Naive thymus-derived CD4-positive, alpha-beta T cell (primary cell): ENCODE measurements at regions of chr2 and their contacts with region 1.

Region 1: GRCh38 chr2:181305301-181306123 is 151.7 kb upstream of the ITGA4 start:
- DNase-seq: peak in 5 of 9 donors; percentile 47 to 61 (median 54)
- ATAC-seq: peak; percentile 77
- H3K4me3 ChIP-seq: peak overlapping the region; percentile 14
- H3K4me3 Mint-ChIP-seq: peak overlapping the region; percentile 71 to 94 (median 82)
- H3K27ac ChIP-seq: peak overlapping the region; percentile 84
- H3K27ac Mint-ChIP-seq: peak overlapping the region; percentile 90 to 100 (median 95)
- H3K4me1 ChIP-seq: peaks cover 66 to 73% of the 10 kb centered on the region in 2 donors
- H3K4me1 Mint-ChIP-seq: peaks cover 49 to 90% (median 84%) of the 10 kb centered on the region in 7 donors
- H3K27me3 ChIP-seq: no peaks in the 10 kb centered on the region
- H3K27me3 Mint-ChIP-seq: no peaks in the 10 kb centered on the region

Region 2: GRCh38 chr2:180933332-180933731 is 372.2 kb before region 1 on chr2:
- CTCF ChIA-PET with region 1: no interaction called
- POLR2A ChIA-PET with region 1: no interaction called
- intact Hi-C with region 1: no loop called
- DNase-seq: no peak
- ATAC-seq: no peak
- H3K4me3 ChIP-seq: no peak overlapping the region
- H3K4me3 Mint-ChIP-seq: no peak overlapping the region
- H3K27ac ChIP-seq: no peak overlapping the region
- H3K27ac Mint-ChIP-seq: no peak overlapping the region
- H3K4me1 ChIP-seq: no peaks in the 10 kb centered on the region
- H3K4me1 Mint-ChIP-seq: peaks cover 0 to 8% (median 0%) of the 10 kb centered on the region in 7 donors
- H3K27me3 ChIP-seq: peaks cover 0 to 4% of the 10 kb centered on the region in 2 donors
- H3K27me3 Mint-ChIP-seq: peaks cover 0 to 15% (median 9%) of the 10 kb centered on the region in 5 donors

Region 3: DNA sequence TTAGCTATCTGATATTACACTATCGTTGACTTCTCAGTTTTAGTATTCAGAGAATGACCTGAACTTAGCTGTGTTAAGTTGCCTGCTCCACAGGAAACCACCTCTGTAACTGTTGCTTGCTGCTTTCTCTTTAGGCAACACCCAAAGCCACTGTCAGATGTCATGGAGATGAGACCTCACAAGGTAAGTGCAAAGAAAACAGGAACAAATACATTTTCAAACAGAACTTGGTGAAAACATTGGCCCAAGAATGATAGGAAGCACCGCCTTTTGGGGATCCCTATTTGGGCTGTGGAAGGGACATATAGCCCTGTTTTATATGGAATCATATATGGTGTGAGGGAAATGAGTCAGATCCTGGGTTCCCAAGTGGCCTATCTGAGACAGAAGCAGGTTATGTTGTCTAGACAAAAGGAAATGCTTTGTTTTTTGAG is 181.7 kb before region 1 on chr2:
- CTCF ChIA-PET with region 1: interaction called, 4 read pairs
- POLR2A ChIA-PET with region 1: interaction called, 9 read pairs
- intact Hi-C with region 1: loop called (anchors 1 kb)
- DNase-seq: peak in 8 of 9 donors; percentile 54 to 91 (median 83)
- ATAC-seq: peak; percentile 98
- H3K4me3 ChIP-seq: peak overlapping the region; percentile 37
- H3K4me3 Mint-ChIP-seq: peak overlapping the region; percentile 73 to 92 (median 82)
- H3K27ac ChIP-seq: peak overlapping the region; percentile 83
- H3K27ac Mint-ChIP-seq: peak overlapping the region; percentile 94 to 100 (median 98)
- H3K4me1 ChIP-seq: peaks cover 39 to 47% of the 10 kb centered on the region in 2 donors
- H3K4me1 Mint-ChIP-seq: peaks cover 27 to 81% (median 78%) of the 10 kb centered on the region in 7 donors
- H3K27me3 ChIP-seq: no peaks in the 10 kb centered on the region
- H3K27me3 Mint-ChIP-seq: no peaks in the 10 kb centered on the region

Region 4: DNA sequence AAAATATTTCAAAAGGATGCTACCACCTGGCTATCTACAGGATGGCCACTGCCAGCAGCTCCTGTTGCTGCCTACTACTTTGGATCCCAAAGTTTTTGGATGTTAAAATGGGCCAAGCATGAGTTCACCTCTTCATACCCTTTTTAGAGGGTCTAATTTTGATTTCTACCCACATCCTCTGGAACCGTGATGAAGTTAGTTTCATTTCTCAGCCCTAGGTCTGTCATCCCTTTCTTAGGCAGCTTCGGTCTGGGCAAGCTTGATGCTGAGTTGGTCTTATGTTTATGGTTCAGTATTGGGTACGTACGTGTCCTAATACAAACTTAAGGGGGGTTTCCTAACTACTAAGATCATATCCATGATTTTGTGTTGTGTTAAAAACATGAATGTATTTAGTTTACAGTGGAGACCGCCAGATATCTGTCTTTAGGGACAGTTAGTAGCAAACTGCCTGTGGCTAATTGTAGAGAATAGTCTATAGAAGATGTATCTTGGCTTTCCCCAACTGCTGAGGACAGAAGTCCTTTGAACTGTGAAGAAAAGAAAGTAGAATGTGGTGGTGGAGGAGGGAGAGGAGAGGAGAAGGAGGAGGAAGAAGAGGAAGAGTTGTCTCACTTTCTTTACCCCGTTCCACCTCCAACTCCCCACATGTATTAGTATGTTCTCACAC is 140.2 kb before region 1 on chr2:
- CTCF ChIA-PET with region 1: no interaction called
- POLR2A ChIA-PET with region 1: no interaction called
- intact Hi-C with region 1: loop called in 1 of 2 experiments (anchors 1 kb)
- DNase-seq: peak in 5 of 9 donors; percentile 28 to 54 (median 32)
- ATAC-seq: peak; percentile 77
- H3K4me3 ChIP-seq: peak overlapping the region; percentile 40
- H3K4me3 Mint-ChIP-seq: peak overlapping the region; percentile 73 to 87 (median 77)
- H3K27ac ChIP-seq: peak overlapping the region; percentile 58
- H3K27ac Mint-ChIP-seq: peak overlapping the region; percentile 89 to 98 (median 95)
- H3K4me1 ChIP-seq: peaks cover 31 to 45% of the 10 kb centered on the region in 2 donors
- H3K4me1 Mint-ChIP-seq: peaks cover 22 to 64% (median 51%) of the 10 kb centered on the region in 7 donors
- H3K27me3 ChIP-seq: no peaks in the 10 kb centered on the region
- H3K27me3 Mint-ChIP-seq: no peaks in the 10 kb centered on the region

Region 5: DNA sequence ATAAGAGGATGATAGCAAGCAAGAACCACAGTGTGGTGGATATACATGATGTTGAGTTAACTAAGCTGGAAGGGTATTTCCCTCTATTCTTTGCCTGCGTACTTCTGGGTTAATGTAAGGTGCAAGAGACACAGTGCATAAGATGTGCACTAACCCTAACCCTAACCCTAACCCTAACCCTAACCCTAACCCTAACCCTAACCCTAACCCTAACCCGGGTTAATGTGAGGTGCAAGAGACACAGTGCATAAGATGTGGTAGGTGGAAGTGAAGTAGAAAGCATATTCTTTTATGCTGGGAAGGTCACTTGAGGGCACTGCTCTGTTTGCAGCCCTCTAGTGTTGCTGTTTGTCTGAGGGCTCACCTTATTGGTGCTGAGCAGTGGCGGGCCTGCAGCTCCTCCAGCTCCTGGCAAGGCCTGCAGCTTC is 29.9 kb before region 1 on chr2:
- CTCF ChIA-PET with region 1: interaction called, 5 read pairs
- POLR2A ChIA-PET with region 1: interaction called, 3 read pairs
- intact Hi-C with region 1: loop called (anchors 1 to 5 kb)
- DNase-seq: peak in 7 of 9 donors; percentile 24 to 38 (median 31)
- ATAC-seq: peak; percentile 93
- H3K4me3 ChIP-seq: no peak overlapping the region
- H3K4me3 Mint-ChIP-seq: peak overlapping the region in 5 of 10 donors; percentile 25 to 62 (median 35)
- H3K27ac ChIP-seq: peak overlapping the region; percentile 38
- H3K27ac Mint-ChIP-seq: peak overlapping the region; percentile 57 to 93 (median 83)
- H3K4me1 ChIP-seq: peaks cover 18 to 30% of the 10 kb centered on the region in 2 donors
- H3K4me1 Mint-ChIP-seq: peaks cover 18 to 56% (median 41%) of the 10 kb centered on the region in 7 donors
- H3K27me3 ChIP-seq: no peaks in the 10 kb centered on the region
- H3K27me3 Mint-ChIP-seq: no peaks in the 10 kb centered on the region

Region 6: GRCh38 chr2:181319286-181319685 is 13.8 kb after region 1 on chr2:
- CTCF ChIA-PET with region 1: interaction called, 4 read pairs
- POLR2A ChIA-PET with region 1: interaction called, 28 read pairs
- intact Hi-C with region 1: no loop called
- DNase-seq: no peak
- ATAC-seq: no peak
- H3K4me3 ChIP-seq: no peak overlapping the region
- H3K4me3 Mint-ChIP-seq: no peak overlapping the region
- H3K27ac ChIP-seq: no peak overlapping the region
- H3K27ac Mint-ChIP-seq: peak overlapping the region in 1 of 9 donors; percentile 7
- H3K4me1 ChIP-seq: peaks cover 7 to 8% of the 10 kb centered on the region in 2 donors
- H3K4me1 Mint-ChIP-seq: peaks cover 11 to 30% (median 17%) of the 10 kb centered on the region in 7 donors
- H3K27me3 ChIP-seq: no peaks in the 10 kb centered on the region
- H3K27me3 Mint-ChIP-seq: no peaks in the 10 kb centered on the region

Region 7: DNA sequence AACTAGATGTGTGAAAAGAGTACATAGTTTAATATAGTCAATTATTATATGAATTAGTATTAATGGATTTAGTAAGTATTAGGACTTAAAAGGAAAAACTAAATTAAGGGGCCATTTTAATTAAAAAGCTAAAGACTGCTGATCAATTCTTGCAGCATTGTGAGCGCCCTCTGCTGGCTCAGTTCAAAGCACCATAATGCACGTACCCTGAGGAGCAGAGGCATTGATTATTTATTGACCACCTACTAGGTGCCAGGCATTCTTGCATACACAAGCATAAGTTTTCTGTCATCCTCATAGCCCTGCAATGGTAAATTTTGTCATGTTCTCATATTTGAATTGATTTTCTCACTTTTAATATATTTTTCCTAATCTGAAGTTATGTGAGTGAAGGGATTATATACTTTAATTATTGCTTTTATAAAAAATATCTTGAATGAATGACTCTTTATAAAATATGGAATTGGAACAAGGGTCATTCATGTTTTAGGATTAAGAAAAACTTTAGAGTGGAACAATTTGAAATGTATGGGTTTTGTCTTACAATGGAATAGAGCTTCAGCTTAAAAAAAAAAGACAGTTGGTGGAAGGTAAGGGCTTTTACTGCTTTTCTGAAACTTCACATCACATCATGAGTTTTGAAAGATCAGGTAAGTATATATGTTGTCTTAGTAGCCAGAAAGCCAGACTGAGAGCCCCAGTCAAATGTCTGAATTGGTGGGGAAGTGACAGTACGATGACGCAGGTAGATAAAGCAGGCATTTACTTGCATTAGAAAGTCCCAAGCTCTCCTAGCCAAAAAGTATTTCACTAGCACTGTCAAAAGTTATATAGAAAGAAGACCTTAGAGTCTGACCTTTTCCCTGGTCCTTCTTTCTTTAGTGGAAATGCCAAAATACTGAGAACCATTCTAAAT is 161.4 kb after region 1 on chr2:
- CTCF ChIA-PET with region 1: interaction called, 4 read pairs
- POLR2A ChIA-PET with region 1: interaction called, 3 read pairs
- intact Hi-C with region 1: loop called in 1 of 2 experiments (anchors 1 kb)
- DNase-seq: peak; percentile 53 to 69 (median 61)
- ATAC-seq: peak; percentile 68
- H3K4me3 ChIP-seq: no peak overlapping the region
- H3K4me3 Mint-ChIP-seq: peak overlapping the region in 9 of 10 donors; percentile 49 to 76 (median 65)
- H3K27ac ChIP-seq: peak overlapping the region; percentile 65
- H3K27ac Mint-ChIP-seq: peak overlapping the region; percentile 59 to 95 (median 87)
- H3K4me1 ChIP-seq: peaks cover 53 to 71% of the 10 kb centered on the region in 2 donors
- H3K4me1 Mint-ChIP-seq: peaks cover 55 to 92% (median 90%) of the 10 kb centered on the region in 7 donors
- H3K27me3 ChIP-seq: no peaks in the 10 kb centered on the region
- H3K27me3 Mint-ChIP-seq: no peaks in the 10 kb centered on the region

Region 8: GRCh38 chr2:181891966-181892798 is 586.7 kb after region 1 on chr2:
- CTCF ChIA-PET with region 1: no interaction called
- POLR2A ChIA-PET with region 1: no interaction called
- intact Hi-C with region 1: loop called in 1 of 2 experiments (anchors 5 kb)
- DNase-seq: peak; percentile 37 to 68 (median 65)
- ATAC-seq: peak; percentile 66
- H3K4me3 ChIP-seq: peak overlapping the region; percentile 85
- H3K4me3 Mint-ChIP-seq: peak overlapping the region; percentile 90 to 99 (median 97)
- H3K27ac ChIP-seq: peak overlapping the region; percentile 76
- H3K27ac Mint-ChIP-seq: peak overlapping the region; percentile 74 to 93 (median 89)
- H3K4me1 ChIP-seq: peaks cover 4 to 22% of the 10 kb centered on the region in 2 donors
- H3K4me1 Mint-ChIP-seq: peaks cover 25 to 49% (median 44%) of the 10 kb centered on the region in 7 donors
- H3K27me3 ChIP-seq: no peaks in the 10 kb centered on the region
- H3K27me3 Mint-ChIP-seq: peaks cover 11 to 35% (median 20%) of the 10 kb centered on the region in 5 donors

Region 9: DNA sequence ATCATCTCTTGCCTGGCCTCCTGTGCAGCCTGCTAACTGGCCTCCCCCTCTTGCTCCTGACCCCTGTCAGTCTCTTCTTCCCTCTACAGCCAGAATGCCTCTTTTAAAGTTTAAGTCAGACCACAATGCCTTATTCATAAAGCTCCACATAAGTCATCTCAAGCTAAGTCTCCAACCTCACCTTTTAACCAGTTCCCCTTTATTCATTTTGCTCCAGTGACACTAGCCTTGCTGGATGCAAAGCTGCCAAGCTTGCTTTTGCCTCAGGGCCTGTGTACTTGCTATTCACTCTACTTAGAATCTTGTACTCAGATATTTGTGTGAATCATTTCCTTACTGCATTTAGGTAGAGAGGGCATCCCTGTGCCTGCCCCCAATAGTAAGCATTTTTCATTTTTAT is 940.5 kb after region 1 on chr2:
- CTCF ChIA-PET with region 1: no interaction called
- POLR2A ChIA-PET with region 1: no interaction called
- intact Hi-C with region 1: no loop called
- DNase-seq: no peak
- ATAC-seq: no peak
- H3K4me3 ChIP-seq: no peak overlapping the region
- H3K4me3 Mint-ChIP-seq: no peak overlapping the region
- H3K27ac ChIP-seq: no peak overlapping the region
- H3K27ac Mint-ChIP-seq: no peak overlapping the region
- H3K4me1 ChIP-seq: no peaks in the 10 kb centered on the region
- H3K4me1 Mint-ChIP-seq: peaks cover 0 to 3% (median 0%) of the 10 kb centered on the region in 7 donors
- H3K27me3 ChIP-seq: no peaks in the 10 kb centered on the region
- H3K27me3 Mint-ChIP-seq: peaks cover 0 to 20% (median 0%) of the 10 kb centered on the region in 5 donors